ENCODE measurements at regions of chr12 and their contacts with region 1.

Region 1: GRCh38 chr12:10749700-10750384 is 26.7 kb upstream of the YBX3 start:
- DNase-seq: peak; percentile 43 to 89 (median 71)
- ATAC-seq: peak; percentile 100
- H3K4me3 ChIP-seq: peak overlapping the region in 1 of 2 experiments; percentile 21
- H3K4me3 Mint-ChIP-seq: peak overlapping the region; percentile 36
- H3K27ac ChIP-seq: no peak overlapping the region
- H3K27ac Mint-ChIP-seq: no peak overlapping the region
- H3K4me1 ChIP-seq: peaks cover 4% of the 10 kb centered on the region
- H3K4me1 Mint-ChIP-seq: peaks cover 6% of the 10 kb centered on the region
- H3K27me3 ChIP-seq: no peaks in the 10 kb centered on the region
- H3K27me3 Mint-ChIP-seq: peaks cover 25% of the 10 kb centered on the region
- CTCF ChIP-seq: peak; percentile 97

Region 2: DNA sequence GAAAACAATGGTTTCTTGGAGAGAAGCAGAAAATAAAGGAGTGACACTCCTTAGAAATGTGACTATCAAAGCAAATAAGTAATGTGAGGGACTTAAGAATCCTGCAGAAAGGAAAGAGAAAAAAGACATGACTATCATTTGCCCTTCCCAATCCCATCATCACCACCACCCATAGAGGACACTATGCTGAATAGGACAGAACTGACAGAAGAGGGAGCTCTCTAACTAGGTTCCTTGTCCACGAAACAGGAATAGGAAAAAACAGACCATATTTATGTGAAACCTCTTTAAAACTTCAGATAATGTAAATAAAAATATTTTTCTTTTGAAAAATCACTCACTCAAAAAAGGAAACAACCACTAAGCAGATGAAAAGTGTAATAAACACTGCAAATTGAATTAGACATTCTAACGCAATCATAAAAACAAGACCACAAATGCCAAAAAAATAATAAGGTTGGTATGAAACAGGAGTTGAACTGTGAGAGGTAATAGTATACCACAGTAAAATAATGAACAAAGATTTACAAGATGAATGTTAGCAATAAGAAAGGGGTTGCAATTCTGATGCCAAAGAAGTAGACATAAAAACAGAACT is 418.1 kb before region 1 on chr12:
- CTCF ChIA-PET with region 1: interaction called, 5 read pairs
- POLR2A ChIA-PET with region 1: interaction called, 3 read pairs
- intact Hi-C with region 1: loop called in 1 of 2 experiments (anchors 1 kb)
- DNase-seq: peak in 3 of 9 experiments; percentile 8 to 77 (median 63)
- ATAC-seq: no peak
- H3K4me3 ChIP-seq: no peak overlapping the region
- H3K4me3 Mint-ChIP-seq: peak overlapping the region; percentile 26
- H3K27ac ChIP-seq: no peak overlapping the region
- H3K27ac Mint-ChIP-seq: no peak overlapping the region
- H3K4me1 ChIP-seq: peaks cover 6% of the 10 kb centered on the region
- H3K4me1 Mint-ChIP-seq: peaks cover 10% of the 10 kb centered on the region
- H3K27me3 ChIP-seq: no peaks in the 10 kb centered on the region
- H3K27me3 Mint-ChIP-seq: no peaks in the 10 kb centered on the region
- CTCF ChIP-seq: peak; percentile 51

Region 3: GRCh38 chr12:10721651-10722501 is 28.0 kb before region 1 on chr12:
- CTCF ChIA-PET with region 1: interaction called, 12 read pairs
- POLR2A ChIA-PET with region 1: no interaction called
- intact Hi-C with region 1: loop called (anchors 1 to 2 kb)
- DNase-seq: peak; percentile 26 to 96 (median 63)
- ATAC-seq: peak; percentile 75
- H3K4me3 ChIP-seq: peak overlapping the region; percentile 69 to 72
- H3K4me3 Mint-ChIP-seq: peak overlapping the region; percentile 91
- H3K27ac ChIP-seq: peak overlapping the region; percentile 86 to 94
- H3K27ac Mint-ChIP-seq: peak overlapping the region; percentile 93
- H3K4me1 ChIP-seq: peaks cover 25% of the 10 kb centered on the region
- H3K4me1 Mint-ChIP-seq: peaks cover 50% of the 10 kb centered on the region
- H3K27me3 ChIP-seq: peaks cover 0 to 6% of the 10 kb centered on the region in 2 experiments
- H3K27me3 Mint-ChIP-seq: peaks cover 15% of the 10 kb centered on the region
- CTCF ChIP-seq: no peak

Region 4: GRCh38 chr12:10726940-10727339 is 22.9 kb before region 1 on chr12:
- CTCF ChIA-PET with region 1: interaction called, 12 read pairs
- POLR2A ChIA-PET with region 1: no interaction called
- intact Hi-C with region 1: loop called (anchors 1 to 2 kb)
- DNase-seq: no peak
- ATAC-seq: no peak
- H3K4me3 ChIP-seq: no peak overlapping the region
- H3K4me3 Mint-ChIP-seq: no peak overlapping the region
- H3K27ac ChIP-seq: no peak overlapping the region
- H3K27ac Mint-ChIP-seq: no peak overlapping the region
- H3K4me1 ChIP-seq: peaks cover 8% of the 10 kb centered on the region
- H3K4me1 Mint-ChIP-seq: peaks cover 15% of the 10 kb centered on the region
- H3K27me3 ChIP-seq: peaks cover 0 to 8% of the 10 kb centered on the region in 2 experiments
- H3K27me3 Mint-ChIP-seq: peaks cover 31% of the 10 kb centered on the region
- CTCF ChIP-seq: no peak